Dendritic cell treated with granulocyte-macrophage colony-stimulating factor and Interleukin-4, amounts not matched to agents 40 ng/mL and 50 ng/mL, for 4 days (primary cell): ENCODE measurements at regions of chr14 and their contacts with region 1.

Region 1: GRCh38 chr14:91286530-91286937 is 42.0 kb upstream of the GPR68 start:
- H3K4me3 Mint-ChIP-seq: no peak overlapping the region
- H3K27ac Mint-ChIP-seq: no peak overlapping the region
- H3K4me1 Mint-ChIP-seq: peaks cover 5% of the 10 kb centered on the region
- H3K27me3 Mint-ChIP-seq: no peaks in the 10 kb centered on the region

Region 2: DNA sequence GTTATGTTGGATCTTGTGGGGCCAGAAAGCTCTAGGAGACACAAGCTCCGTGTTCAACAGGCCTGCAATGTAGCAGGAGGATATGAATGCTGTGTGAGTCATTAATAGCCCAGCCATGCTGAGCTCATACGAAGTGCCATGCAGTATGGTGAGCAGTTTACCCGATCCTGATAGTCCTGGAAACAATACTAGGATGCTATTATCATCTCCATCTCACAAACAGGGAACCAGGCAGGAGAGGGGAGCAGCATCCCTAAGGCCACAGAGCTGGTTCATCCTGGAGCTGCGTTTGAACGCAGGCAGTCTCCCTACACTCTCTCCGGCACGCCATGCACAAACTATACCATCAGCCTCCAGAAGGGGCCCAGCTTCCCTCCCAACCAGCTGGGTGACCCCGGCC is 490.8 kb before region 1 on chr14:
- intact Hi-C with region 1: no loop called
- H3K4me3 Mint-ChIP-seq: no peak overlapping the region
- H3K27ac Mint-ChIP-seq: peak overlapping the region; percentile 95
- H3K4me1 Mint-ChIP-seq: peaks cover 66% of the 10 kb centered on the region
- H3K27me3 Mint-ChIP-seq: no peaks in the 10 kb centered on the region

Region 3: DNA sequence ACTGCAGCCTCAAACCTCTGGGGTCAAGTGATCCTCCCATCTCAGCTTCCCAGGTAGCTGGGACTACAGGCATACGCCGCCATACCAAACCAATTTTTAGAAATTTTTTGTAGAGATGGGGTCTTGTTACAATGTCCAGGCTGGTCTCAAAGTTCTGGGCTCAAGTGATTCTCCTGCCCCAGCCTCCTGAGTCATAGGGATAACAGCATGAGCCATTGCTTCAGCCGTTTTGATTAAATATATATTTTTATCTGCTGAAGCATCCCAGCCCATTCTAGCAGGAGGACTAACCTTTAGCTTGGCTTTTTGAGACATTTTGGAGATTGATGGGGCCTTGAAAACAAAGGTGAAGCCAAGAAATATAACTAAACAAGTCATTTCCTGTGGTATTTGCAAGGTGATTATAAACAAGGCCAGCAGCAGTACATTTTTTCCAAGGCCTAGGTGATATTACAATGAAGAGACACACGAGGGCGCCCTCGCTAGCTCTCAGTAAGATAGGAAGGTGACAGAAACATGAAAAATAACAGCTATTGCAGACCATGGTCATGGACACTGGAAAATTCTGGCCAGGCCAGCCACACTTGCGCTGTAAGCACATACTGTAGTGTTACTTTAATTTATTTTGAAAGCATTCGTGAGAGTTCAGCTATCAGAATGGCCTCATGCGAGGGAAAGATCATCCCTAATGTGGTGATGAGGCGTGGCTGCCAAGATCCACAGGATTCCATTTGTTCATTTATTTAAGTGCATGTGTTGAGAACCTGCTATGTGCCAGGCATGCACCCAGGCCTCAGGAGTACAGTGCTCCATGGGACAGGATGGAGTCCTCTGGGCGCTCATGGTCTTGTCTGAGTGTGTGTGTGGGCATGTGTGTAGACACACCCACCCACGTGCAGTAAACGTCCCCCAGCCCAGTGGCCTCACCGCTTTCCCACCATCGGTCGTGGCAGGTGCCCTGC is 109.2 kb before region 1 on chr14:
- intact Hi-C with region 1: loop called (anchors 1 kb)
- H3K4me3 Mint-ChIP-seq: no peak overlapping the region
- H3K27ac Mint-ChIP-seq: peak overlapping the region; percentile 2
- H3K4me1 Mint-ChIP-seq: no peaks in the 10 kb centered on the region
- H3K27me3 Mint-ChIP-seq: no peaks in the 10 kb centered on the region